Activated T-helper 1 cell treated with anti-CD3 and anti-CD28 coated beads, Interleukin-12 subunit alpha, Interleukin-12 subunit beta, Interleukin-2, Interleukin-4 antibody, amounts not matched to agents 30 ng/mL and 10 ng/mL and 1 ng/mL, durations not matched to agents 14 hours and 24 hours and 36 hours (primary cell): ENCODE measurements at regions of chr2 and their contacts with region 1.

Region 1: DNA sequence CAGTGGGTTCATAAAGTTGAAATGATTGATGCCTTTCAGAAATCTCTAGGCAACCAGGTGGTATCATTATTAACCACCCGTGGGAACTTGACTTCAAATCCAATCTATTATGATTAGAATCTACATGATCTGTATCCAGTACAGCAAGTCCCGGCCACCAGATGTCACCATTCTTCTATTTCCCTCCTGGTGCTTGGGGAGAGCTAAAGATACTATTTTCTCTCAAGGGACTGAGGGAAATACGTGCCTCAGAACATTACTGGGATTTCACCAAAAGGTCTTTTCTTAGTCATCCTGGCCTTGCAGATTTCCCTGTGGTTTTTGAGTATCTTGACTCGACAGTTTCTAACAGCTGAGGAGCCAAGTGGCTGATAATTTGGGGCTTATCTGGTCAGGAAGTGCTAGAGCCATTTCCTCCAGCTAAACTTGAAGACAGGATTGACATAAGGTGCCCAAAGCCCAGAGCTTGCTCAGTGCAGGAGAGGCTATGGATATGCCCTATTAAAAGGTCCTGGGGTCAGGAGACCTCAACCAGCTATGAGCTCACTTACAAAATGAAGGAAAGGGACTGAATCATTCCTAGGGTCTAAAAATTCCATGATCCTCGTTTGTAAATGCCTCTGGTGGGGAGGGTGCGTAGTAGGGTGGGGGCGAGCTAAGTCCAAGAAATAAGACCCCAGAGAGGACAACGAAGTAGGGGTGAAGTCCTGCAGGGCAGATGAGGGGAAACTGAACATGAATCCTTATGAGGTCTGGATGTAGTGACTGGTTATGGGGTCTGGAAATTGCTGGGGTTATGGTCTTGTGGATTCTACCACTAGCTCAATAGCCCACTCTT is 135.4 kb upstream of the MGAT5 start:
- DNase-seq: peak; percentile 69
- H3K4me3 Mint-ChIP-seq: peak overlapping the region; percentile 99
- H3K27ac Mint-ChIP-seq: peak overlapping the region; percentile 16
- H3K4me1 Mint-ChIP-seq: peaks cover 28% of the 10 kb centered on the region
- H3K27me3 Mint-ChIP-seq: peaks cover 29% of the 10 kb centered on the region

Region 2: GRCh38 chr2:133886735-133887660 is 231.5 kb before region 1 on chr2:
- intact Hi-C with region 1: loop called (anchors 1 kb)
- DNase-seq: peak; percentile 9
- H3K4me3 Mint-ChIP-seq: no peak overlapping the region
- H3K27ac Mint-ChIP-seq: no peak overlapping the region
- H3K4me1 Mint-ChIP-seq: no peaks in the 10 kb centered on the region
- H3K27me3 Mint-ChIP-seq: peaks cover 5% of the 10 kb centered on the region

Region 3: DNA sequence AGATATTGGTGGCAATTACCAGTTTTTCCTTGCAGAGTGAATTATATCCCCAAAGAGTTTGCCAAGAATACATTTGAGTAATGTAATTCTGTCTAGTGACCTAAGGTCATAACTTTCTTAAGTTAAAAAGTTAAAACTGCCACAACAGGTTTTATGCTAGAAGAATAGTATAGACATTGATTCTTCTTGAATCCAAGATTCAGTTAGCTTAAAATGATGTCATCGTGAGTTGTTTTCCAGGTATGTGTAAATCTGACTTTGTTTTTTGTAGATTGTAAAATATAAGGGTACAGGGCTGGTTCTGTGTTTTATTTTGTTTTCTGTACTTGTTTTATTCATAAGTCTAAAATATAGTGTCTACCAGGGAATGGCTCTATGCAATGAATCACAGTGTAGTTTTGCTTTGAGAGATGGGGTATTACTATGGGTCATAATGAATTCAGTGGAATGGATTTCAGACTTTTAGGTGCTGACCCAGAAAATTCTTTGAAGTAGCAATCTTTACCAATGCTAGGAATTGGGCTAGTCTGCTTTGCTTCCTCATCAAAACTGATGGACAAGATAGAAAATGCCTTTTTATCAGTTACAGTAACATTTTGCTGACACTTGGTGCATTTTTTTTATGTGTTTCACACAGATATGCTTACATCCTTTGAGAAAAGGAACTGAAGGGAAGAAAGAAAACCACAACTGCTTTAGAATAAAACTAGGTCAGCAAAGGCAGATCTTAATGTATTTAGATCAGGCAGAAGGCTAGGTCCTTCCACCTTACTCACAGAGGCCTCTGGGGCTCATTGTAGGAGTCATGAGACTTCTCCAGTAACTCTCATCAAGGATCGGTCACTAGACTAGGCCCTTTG is 114.6 kb after region 1 on chr2:
- intact Hi-C with region 1: loop called (anchors 1 kb)
- DNase-seq: no peak
- H3K4me3 Mint-ChIP-seq: peak overlapping the region; percentile 53
- H3K27ac Mint-ChIP-seq: peak overlapping the region; percentile 64
- H3K4me1 Mint-ChIP-seq: peaks cover 70% of the 10 kb centered on the region
- H3K27me3 Mint-ChIP-seq: peaks cover 2% of the 10 kb centered on the region

Region 4: DNA sequence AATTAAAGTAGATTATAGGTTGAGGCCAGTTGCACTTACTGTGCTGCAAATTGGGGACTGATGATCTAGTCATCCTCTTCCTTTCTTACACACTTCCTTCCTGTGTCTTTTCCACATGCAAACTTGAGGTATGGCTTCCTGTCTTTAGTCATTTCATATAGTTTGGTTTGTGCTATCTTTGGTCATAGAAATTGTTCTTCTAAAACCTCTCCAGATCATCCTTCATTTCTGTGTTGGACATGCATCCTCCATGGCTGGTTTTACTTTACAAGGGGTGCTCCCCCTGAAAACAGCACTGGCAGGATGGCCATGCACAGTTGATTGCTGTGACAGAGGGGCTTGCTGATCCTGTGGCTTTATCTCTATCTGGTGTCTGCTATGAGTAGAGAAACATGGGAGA is 171.9 kb after region 1 on chr2:
- intact Hi-C with region 1: loop called (anchors 1 kb)
- DNase-seq: peak; percentile 9
- H3K4me3 Mint-ChIP-seq: no peak overlapping the region
- H3K27ac Mint-ChIP-seq: no peak overlapping the region
- H3K4me1 Mint-ChIP-seq: peaks cover 26% of the 10 kb centered on the region
- H3K27me3 Mint-ChIP-seq: peaks cover 10% of the 10 kb centered on the region

Region 5: DNA sequence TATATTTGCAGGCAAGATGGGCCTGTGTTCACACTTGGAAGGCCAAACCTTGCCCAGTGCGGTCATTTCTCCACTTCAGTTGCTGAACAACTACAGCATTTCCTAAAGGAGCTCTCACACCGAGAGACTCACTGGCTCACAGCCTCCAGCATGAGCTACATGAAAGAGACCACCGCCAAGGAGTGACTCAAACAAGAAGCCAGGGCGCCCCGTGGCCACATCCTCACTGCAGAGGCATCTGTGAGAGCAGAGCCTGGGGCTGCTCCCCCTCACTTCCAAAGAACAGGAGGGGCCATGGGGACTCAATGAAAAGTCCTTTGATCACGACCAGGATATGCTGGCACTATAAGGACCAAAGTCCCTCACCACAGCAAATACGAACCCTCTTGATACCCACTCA is 550.3 kb after region 1 on chr2:
- intact Hi-C with region 1: loop called (anchors 5 kb)
- DNase-seq: peak; percentile 74
- H3K4me3 Mint-ChIP-seq: peak overlapping the region; percentile 37
- H3K27ac Mint-ChIP-seq: peak overlapping the region; percentile 47
- H3K4me1 Mint-ChIP-seq: peaks cover 59% of the 10 kb centered on the region
- H3K27me3 Mint-ChIP-seq: peaks cover 34% of the 10 kb centered on the region

Region 6: DNA sequence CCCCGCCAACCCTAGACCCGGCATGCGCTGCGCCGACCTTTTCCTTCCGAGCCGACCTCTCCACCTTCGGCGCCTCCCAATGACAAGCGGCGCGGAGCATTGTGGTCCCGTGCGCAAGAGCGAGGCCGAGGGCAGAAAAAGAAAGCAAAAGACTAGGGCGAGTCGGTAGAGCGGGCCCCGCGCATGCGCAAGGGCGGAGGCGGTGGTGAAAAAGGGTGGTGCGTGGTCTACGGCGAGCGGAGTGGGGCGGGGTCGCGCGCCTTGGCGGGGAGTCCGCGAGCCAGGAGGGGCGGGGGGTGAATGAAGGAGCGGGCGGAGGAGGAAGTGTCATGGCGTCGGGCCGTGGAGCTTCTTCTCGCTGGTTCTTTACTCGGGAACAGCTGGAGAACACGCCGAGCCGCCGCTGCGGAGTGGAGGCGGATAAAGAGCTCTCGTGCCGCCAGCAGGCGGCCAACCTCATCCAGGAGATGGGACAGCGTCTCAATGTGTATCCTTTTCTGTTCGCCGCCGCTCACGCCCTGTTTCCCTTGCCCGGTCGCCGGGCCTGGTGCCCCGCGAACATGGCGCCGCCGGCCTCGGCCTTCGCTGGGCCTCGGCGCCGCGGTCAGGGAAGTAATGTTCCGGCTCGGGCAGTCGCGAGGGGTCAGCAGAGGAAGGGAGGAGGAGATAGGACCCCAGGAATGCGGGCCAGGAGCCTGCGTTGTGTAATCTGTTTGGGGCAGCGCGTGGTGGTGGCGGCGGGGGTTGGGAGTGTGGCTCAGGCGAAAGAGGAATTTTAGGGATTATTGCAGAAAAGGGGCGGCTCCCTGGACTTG is 800.2 kb after region 1 on chr2 and contains the start of gene CCNT2:
- intact Hi-C with region 1: loop called (anchors 1 kb)
- DNase-seq: peak; percentile 100
- H3K4me3 Mint-ChIP-seq: peak within 1 kb of the TSS; percentile 96
- H3K27ac Mint-ChIP-seq: peak within 1 kb of the TSS; percentile 97
- H3K4me1 Mint-ChIP-seq: peaks cover 28% of the 10 kb centered on the region
- H3K27me3 Mint-ChIP-seq: peaks cover 11% of the 10 kb centered on the region
- total RNA-seq, gene CCNT2: 41.4 and 43.7 TPM in 2 replicates

Region 7: GRCh38 chr2:135876066-135876711 is 1757.7 kb after region 1 on chr2 and contains the start of gene MCM6:
- intact Hi-C with region 1: loop called (anchors 5 kb)
- DNase-seq: peak; percentile 99
- H3K4me3 Mint-ChIP-seq: peak within 1 kb of the TSS; percentile 98
- H3K27ac Mint-ChIP-seq: peak within 1 kb of the TSS; percentile 99
- H3K4me1 Mint-ChIP-seq: peaks cover 45% of the 10 kb centered on the region
- H3K27me3 Mint-ChIP-seq: peaks cover 2% of the 10 kb centered on the region
- total RNA-seq, gene MCM6: 176 and 177 TPM in 2 replicates